Uterus (tissue), 4 donors: ENCODE measurements at regions of chr1 and their contacts with region 1.

Region 1: DNA sequence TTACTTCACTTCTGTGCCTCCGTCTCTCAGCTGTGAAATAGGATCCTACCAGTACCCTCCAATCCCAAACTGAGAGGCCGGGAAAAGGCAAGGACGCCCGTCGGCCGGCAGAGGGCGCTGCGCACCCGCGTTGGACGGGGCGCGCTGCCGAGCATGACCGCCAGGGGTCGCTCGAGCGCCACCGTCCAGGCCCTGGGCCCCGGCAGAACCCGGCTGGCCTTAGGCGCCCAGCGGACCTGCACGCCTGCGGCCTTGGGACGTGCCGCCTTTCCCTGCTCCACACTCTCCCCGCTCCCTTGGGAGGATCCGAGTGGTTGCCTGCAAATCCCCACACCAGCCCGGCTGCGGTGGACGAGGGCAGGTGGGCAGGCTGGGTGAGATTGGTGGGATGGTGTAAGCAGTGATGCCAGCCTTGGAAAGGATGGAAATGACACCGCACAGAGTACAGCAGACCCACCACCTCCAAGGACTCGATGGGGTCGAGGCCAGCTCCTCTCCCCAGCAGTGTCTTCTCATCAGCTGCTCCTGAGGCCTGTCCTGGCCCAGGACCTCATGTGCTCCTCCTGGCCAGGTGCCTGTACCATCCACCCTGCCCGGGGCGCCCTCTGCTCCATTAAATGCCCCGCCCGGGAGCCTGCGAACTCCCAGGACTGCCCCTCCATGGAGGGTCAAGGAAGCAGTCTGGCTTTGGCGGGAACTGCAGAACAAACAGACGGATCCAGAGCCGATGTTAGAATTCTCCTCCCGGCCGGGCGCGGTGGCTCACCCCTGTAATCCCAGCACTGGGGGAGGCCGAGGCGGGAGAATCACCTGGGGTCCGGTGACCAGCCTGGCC is 47.4 kb upstream of the LBR start:
- DNase-seq: peak; percentile 59 to 80
- H3K4me3 ChIP-seq: no peak overlapping the region
- H3K27ac ChIP-seq: no peak overlapping the region
- H3K4me1 ChIP-seq: no peaks in the 10 kb centered on the region
- H3K27me3 ChIP-seq: no peaks in the 10 kb centered on the region
- CTCF ChIP-seq: peak; percentile 100
- POLR2A ChIP-seq: peak in 1 of 2 donors; percentile 57

Region 2: DNA sequence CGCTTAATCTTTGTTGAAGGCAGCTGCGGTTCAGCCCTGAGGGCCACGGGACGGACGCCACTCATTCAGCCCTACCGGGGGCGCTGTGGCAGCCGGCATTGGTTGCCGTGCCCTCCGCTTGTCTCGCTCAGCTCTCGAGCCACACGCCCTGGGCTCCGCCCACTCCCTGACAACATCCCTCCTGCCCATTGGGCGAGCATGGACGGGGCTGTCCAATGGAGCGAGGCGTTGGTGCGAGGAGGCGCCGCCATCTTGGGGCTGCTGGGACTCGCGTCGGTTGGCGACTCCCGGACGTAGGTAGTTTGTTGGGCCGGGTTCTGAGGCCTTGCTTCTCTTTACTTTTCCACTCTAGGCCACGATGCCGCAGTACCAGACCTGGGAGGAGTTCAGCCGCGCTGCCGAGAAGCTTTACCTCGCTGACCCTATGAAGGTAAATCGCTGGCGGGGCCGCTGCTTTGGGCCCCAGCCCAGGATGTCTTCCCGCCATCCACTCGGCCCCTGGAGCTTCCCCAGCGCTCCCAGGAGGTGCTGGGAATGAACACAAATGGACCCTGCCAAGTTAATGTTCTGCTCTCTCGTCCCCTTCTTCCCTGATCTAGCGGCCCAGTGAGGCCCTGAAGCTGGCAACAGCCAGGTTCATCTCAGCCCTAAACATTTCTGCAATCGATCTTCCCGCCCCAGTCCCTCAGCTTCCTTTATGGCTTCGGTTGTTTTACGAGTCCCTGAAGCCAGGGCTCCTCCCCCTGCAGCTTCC is 302.6 kb after region 1 on chr1 and contains the start of gene SRP9:
- intact Hi-C with region 1: loop called (anchors 10 kb)
- DNase-seq: peak; percentile 98 to 99
- H3K4me3 ChIP-seq: peak within 1 kb of the TSS; percentile 62 to 87
- H3K27ac ChIP-seq: peak within 1 kb of the TSS; percentile 93 to 96
- H3K4me1 ChIP-seq: peaks cover 0 to 5% of the 10 kb centered on the region in 2 donors
- H3K27me3 ChIP-seq: no peaks in the 10 kb centered on the region
- CTCF ChIP-seq: peak; percentile 84 to 95 (median 90)
- POLR2A ChIP-seq: peak; percentile 66 to 83
- total RNA-seq, gene SRP9: 169 to 551 (median 202) TPM

Region 3: GRCh38 chr1:225911191-225912130 is 436.3 kb after region 1 on chr1:
- intact Hi-C with region 1: loop called (anchors 2 kb)
- DNase-seq: peak; percentile 46 to 74
- H3K4me3 ChIP-seq: no peak overlapping the region
- H3K27ac ChIP-seq: peak overlapping the region in 1 of 2 donors; percentile 4
- H3K4me1 ChIP-seq: no peaks in the 10 kb centered on the region
- H3K27me3 ChIP-seq: no peaks in the 10 kb centered on the region
- CTCF ChIP-seq: peak; percentile 82 to 93 (median 85)
- POLR2A ChIP-seq: no peak

Region 4: DNA sequence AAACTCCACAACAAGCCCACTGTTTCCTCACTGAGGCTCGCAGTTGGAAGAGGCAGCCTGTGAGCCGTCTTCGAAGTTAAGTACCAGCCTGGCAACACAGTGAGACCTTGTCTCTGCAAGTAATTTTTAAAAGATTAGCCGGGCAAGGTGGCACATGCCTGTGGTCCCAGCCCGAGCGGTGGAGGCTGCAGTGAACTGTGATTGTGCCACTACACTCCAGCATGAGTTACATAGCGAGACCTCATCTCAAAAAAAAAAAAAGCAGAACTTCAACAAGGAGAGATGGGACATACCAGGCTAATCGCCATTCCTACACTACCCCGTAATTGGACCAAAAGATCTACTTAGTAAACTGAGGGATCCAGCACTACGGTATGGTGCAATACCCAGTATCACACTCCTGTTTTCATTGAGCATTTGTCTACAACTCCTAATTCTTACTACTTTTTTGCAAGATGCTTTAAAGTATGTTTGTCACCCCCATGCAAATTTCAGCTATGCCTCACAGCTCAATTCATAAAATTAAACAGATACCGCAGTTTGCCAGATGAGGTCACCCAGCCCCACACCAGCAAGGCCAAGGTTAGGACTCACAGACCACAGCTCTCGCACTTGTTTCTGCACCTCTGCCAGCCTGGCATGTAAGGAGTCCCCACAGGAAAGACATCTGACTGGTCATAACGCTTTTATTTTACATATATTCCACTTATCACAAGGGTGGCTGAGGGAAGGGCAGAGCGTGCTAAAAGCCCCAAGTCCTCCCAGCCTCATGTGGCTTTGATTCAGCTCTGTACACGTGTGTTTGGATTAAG is 502.9 kb after region 1 on chr1:
- intact Hi-C with region 1: loop called (anchors 5 kb)
- DNase-seq: no peak
- H3K4me3 ChIP-seq: no peak overlapping the region
- H3K27ac ChIP-seq: no peak overlapping the region
- H3K4me1 ChIP-seq: no peaks in the 10 kb centered on the region
- H3K27me3 ChIP-seq: no peaks in the 10 kb centered on the region
- CTCF ChIP-seq: no peak
- POLR2A ChIP-seq: no peak